ENCODE measurements at regions of chr12 and their contacts with region 1.

Region 1: GRCh38 chr12:104286538-104287482 is 16.7 kb upstream of the EID3 start:
- DNase-seq: peak; percentile 97
- ATAC-seq: peak; percentile 92
- H3K4me3 Mint-ChIP-seq: peak overlapping the region; percentile 91
- H3K27ac Mint-ChIP-seq: peak overlapping the region; percentile 100
- H3K4me1 Mint-ChIP-seq: peaks cover 22% of the 10 kb centered on the region
- H3K27me3 Mint-ChIP-seq: no peaks in the 10 kb centered on the region

Region 2: DNA sequence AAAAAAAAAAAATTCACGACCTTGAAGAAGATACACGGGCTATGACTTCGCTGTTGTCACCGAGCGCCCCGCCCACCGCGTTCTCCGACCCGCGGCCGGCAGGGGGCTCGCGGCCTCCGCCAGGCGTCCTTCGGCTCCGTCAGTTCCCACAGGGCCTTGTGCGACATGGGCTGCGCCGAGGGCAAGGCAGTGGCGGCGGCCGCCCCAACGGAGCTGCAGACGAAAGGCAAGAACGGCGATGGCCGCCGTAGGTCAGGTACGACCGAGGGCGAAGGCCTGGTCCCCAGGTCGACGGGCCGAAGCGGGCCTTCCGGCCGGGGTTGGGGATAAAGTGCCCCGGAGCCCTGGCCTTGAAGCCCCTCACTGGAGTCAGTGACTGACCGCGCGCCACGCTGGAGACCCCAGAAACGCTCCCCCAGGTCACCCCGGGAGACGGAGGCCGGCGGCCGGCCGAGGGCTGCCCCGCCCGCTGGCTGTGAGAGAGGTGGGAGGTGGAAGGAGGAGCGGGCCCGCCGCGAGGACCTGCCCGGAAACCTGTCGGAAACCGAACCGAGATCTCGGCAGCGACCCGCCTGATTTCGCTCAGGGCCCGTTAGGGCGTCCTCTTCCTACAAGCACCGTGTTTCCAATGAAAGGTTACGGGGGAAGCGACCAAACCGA is 71.0 kb before region 1 on chr12 and contains the start of gene TXNRD1:
- CTCF ChIA-PET with region 1: interaction called, 47 read pairs
- DNase-seq: peak; percentile 89
- ATAC-seq: peak; percentile 91
- H3K4me3 Mint-ChIP-seq: peak within 1 kb of the TSS; percentile 71
- H3K27ac Mint-ChIP-seq: peak within 1 kb of the TSS; percentile 28
- H3K4me1 Mint-ChIP-seq: peaks cover 35% of the 10 kb centered on the region
- H3K27me3 Mint-ChIP-seq: peaks cover 11% of the 10 kb centered on the region
- total RNA-seq, gene TXNRD1: 109 to 118 TPM

Region 3: GRCh38 chr12:104276273-104277131 is 10.3 kb before region 1 on chr12:
- CTCF ChIA-PET with region 1: interaction called, 11 read pairs
- DNase-seq: no peak
- ATAC-seq: peak; percentile 73
- H3K4me3 Mint-ChIP-seq: peak overlapping the region; percentile 51
- H3K27ac Mint-ChIP-seq: peak overlapping the region; percentile 45
- H3K4me1 Mint-ChIP-seq: peaks cover 9% of the 10 kb centered on the region
- H3K27me3 Mint-ChIP-seq: peaks cover 8% of the 10 kb centered on the region

Region 4: DNA sequence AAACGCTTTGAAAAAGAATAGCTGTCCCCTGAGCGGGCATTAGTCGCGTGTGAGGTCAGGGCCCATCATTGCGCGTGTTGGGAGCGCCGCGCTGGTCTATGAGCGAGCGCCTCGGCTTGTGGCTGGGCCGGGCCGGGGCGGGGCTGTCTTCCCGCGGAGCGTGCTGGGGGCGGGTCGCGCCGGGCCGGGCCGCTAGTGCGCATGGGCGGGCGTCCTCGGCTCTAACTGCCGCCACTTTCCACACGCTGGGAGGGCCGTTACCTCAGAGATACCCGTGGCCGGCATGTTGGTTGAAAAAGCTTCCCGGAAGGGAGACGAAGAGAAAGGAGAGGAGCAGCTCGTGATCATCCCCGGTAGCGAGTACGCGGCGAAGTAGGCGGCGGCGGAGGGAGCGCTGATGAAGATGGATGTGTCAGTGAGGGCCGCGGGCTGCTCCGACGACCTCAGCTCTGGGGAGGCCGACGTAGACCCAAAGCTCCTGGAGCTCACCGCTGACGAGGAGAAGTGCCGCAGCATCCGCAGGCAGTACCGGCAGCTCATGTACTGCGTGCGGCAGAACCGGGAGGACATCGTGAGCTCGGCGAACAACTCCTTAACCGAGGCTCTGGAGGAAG is 16.8 kb after region 1 on chr12 and contains the start of gene EID3:
- CTCF ChIA-PET with region 1: interaction called, 40 read pairs
- DNase-seq: peak; percentile 93
- ATAC-seq: peak; percentile 97
- H3K4me3 Mint-ChIP-seq: peak within 1 kb of the TSS; percentile 78
- H3K27ac Mint-ChIP-seq: peak within 1 kb of the TSS; percentile 90
- H3K4me1 Mint-ChIP-seq: peaks cover 65% of the 10 kb centered on the region
- H3K27me3 Mint-ChIP-seq: no peaks in the 10 kb centered on the region
- total RNA-seq, gene EID3: 6.9 to 7.1 TPM

Region 5: DNA sequence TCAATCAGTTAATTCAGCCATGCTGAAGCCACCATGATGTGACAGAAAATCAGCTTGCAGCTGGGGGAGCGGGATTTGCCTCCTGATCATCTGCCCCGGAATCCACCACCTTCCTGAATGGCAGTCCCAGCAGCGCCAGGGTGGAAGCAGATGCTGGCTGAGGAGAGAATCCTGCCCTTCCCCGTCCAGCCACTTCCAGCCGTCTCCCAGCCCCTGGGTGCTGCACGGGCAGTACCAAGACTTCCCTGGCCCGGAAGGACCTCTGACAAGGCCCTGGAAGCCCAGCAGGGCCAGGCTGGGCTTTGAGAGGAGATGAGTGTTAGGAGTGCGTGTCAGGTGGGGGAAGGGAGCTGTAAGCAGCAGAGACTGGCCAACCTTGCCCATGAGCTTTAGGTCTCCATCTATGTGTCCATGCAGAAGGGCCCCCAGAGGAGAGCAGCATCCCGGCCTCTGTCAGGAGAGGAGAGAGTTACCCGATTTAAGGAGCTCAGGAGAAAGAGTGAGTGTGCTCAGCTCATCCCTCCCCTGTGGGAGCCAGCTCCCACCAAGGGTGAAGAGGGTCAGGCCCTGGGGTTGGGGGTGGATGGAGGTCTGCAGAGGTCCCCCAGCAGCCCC is 86.0 kb after region 1 on chr12:
- CTCF ChIA-PET with region 1: no interaction called
- DNase-seq: peak; percentile 34
- ATAC-seq: no peak
- H3K4me3 Mint-ChIP-seq: no peak overlapping the region
- H3K27ac Mint-ChIP-seq: no peak overlapping the region
- H3K4me1 Mint-ChIP-seq: peaks cover 18% of the 10 kb centered on the region
- H3K27me3 Mint-ChIP-seq: no peaks in the 10 kb centered on the region